B cell (primary cell): ENCODE measurements at regions of chr2 and their contacts with region 1.

Region 1: DNA sequence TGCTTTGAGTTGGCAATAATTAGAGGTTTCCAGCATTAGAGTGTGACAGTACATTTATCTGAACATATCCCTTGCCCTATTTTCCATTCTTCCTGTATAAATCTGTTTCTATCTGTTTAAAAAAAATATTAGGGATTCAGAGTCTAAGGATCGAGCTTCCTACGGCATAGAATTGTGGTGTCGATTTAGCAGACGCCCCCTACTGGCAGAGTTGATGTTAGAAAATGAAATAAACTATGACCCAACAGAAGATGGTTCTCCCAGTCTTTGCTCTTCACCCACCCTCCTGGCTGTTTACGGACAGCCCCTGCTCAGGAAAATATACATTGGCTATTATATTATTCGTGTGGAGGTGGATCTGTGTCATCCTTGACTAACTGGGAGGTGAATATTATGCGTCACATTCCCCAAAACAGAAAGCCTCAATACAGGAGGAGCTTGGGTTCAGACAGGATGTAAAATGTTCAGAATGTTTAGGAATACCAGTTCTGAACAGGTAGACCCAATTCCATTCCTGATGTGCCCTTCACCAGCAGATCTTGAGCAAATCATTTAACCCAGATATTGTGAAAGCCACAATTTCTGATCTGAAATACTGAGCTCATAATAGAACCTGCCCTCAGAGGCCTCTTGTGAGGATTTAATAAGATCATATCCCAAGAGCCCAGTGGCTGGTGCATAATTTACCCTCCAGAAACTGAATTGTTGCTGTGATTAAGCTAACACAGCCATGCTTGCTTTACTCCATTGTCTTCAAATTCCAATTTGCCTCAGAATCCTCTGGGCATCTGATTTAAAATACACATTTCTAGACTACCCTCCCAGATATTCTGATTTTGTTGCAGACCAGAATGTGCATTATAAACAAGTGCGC is 10.8 kb upstream of the ERMN start:
- DNase-seq: peak; percentile 68
- ATAC-seq: no peak
- H3K4me3 ChIP-seq: peak overlapping the region in 1 of 5 experiments; percentile 37
- H3K4me3 Mint-ChIP-seq: no peak overlapping the region
- H3K27ac ChIP-seq: no peak overlapping the region
- H3K27ac Mint-ChIP-seq: no peak overlapping the region
- H3K4me1 ChIP-seq: peaks cover 6% of the 10 kb centered on the region in 2 donors
- H3K4me1 Mint-ChIP-seq: peaks cover 7% of the 10 kb centered on the region
- H3K27me3 ChIP-seq: no peaks in the 10 kb centered on the region
- H3K27me3 Mint-ChIP-seq: no peaks in the 10 kb centered on the region
- CTCF ChIP-seq: peak; percentile 86

Region 2: DNA sequence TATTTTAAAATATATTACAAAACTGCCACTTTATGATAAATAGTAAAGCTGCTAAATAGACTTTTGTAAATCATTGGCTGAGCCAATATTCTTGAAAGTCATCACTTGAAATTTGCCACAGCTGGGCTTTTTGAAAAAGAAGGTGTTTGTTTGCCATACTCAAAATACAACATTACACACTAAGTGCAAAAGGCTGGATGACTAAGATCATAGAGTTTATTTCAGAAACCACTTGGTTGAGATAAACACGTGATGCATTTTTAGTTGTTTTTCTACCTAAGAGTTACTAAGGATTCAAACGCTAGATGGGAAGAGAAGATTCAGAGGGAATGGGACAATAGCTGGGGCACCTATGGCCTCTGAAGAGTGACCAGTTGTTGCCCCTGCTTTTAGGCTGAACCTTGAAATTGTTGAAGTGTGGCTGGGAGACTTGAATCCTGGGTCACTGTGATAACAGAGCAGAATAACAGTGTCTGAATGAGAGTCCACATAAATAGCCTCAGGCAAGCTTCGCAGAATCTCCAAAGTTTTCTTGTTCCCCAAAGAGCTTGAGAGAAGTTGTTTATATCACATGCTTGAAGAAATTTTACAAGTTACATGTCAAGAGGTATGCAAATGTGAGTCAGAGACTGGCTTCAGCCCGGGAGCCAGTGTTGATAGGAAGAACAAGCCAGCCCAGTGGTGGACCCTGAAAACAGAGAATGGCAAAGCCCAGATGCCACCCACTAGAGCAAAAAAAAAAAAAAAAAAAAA is 490.4 kb before region 1 on chr2:
- CTCF ChIA-PET with region 1: no interaction called
- POLR2A ChIA-PET with region 1: no interaction called
- intact Hi-C with region 1: no loop called
- DNase-seq: no peak
- ATAC-seq: no peak
- H3K4me3 ChIP-seq: no peak overlapping the region
- H3K4me3 Mint-ChIP-seq: no peak overlapping the region
- H3K27ac ChIP-seq: no peak overlapping the region
- H3K27ac Mint-ChIP-seq: no peak overlapping the region
- H3K4me1 ChIP-seq: no peaks in the 10 kb centered on the region
- H3K4me1 Mint-ChIP-seq: no peaks in the 10 kb centered on the region
- H3K27me3 ChIP-seq: no peaks in the 10 kb centered on the region
- H3K27me3 Mint-ChIP-seq: no peaks in the 10 kb centered on the region
- CTCF ChIP-seq: no peak

Region 3: GRCh38 chr2:157355618-157356017 is 19.2 kb after region 1 on chr2:
- CTCF ChIA-PET with region 1: interaction called, 28 read pairs
- POLR2A ChIA-PET with region 1: no interaction called
- intact Hi-C with region 1: no loop called
- DNase-seq: no peak
- ATAC-seq: no peak
- H3K4me3 ChIP-seq: no peak overlapping the region
- H3K4me3 Mint-ChIP-seq: no peak overlapping the region
- H3K27ac ChIP-seq: no peak overlapping the region
- H3K27ac Mint-ChIP-seq: no peak overlapping the region
- H3K4me1 ChIP-seq: no peaks in the 10 kb centered on the region
- H3K4me1 Mint-ChIP-seq: no peaks in the 10 kb centered on the region
- H3K27me3 ChIP-seq: no peaks in the 10 kb centered on the region
- H3K27me3 Mint-ChIP-seq: no peaks in the 10 kb centered on the region
- CTCF ChIP-seq: no peak

Region 4: GRCh38 chr2:157413326-157414035 is 77.1 kb after region 1 on chr2:
- CTCF ChIA-PET with region 1: interaction called, 20 read pairs
- POLR2A ChIA-PET with region 1: no interaction called
- intact Hi-C with region 1: no loop called
- DNase-seq: peak; percentile 73
- ATAC-seq: peak; percentile 58
- H3K4me3 ChIP-seq: peak overlapping the region in 1 of 5 experiments; percentile 31
- H3K4me3 Mint-ChIP-seq: peak overlapping the region; percentile 60
- H3K27ac ChIP-seq: peak overlapping the region; percentile 34 to 69
- H3K27ac Mint-ChIP-seq: peak overlapping the region; percentile 82
- H3K4me1 ChIP-seq: peaks cover 53 to 61% of the 10 kb centered on the region in 2 donors
- H3K4me1 Mint-ChIP-seq: peaks cover 77% of the 10 kb centered on the region
- H3K27me3 ChIP-seq: no peaks in the 10 kb centered on the region
- H3K27me3 Mint-ChIP-seq: no peaks in the 10 kb centered on the region
- CTCF ChIP-seq: no peak

Region 5: GRCh38 chr2:157433394-157433793 is 97.0 kb after region 1 on chr2:
- CTCF ChIA-PET with region 1: interaction called, 18 read pairs
- POLR2A ChIA-PET with region 1: interaction called, 3 read pairs
- intact Hi-C with region 1: no loop called
- DNase-seq: no peak
- ATAC-seq: no peak
- H3K4me3 ChIP-seq: no peak overlapping the region
- H3K4me3 Mint-ChIP-seq: peak overlapping the region; percentile 68
- H3K27ac ChIP-seq: peak overlapping the region in 1 of 2 donors; percentile 34
- H3K27ac Mint-ChIP-seq: peak overlapping the region; percentile 39
- H3K4me1 ChIP-seq: peaks cover 65 to 73% of the 10 kb centered on the region in 2 donors
- H3K4me1 Mint-ChIP-seq: peaks cover 82% of the 10 kb centered on the region
- H3K27me3 ChIP-seq: no peaks in the 10 kb centered on the region
- H3K27me3 Mint-ChIP-seq: no peaks in the 10 kb centered on the region
- CTCF ChIP-seq: no peak

Region 6: GRCh38 chr2:157492189-157492773 is 155.9 kb after region 1 on chr2:
- CTCF ChIA-PET with region 1: interaction called, 157 read pairs
- POLR2A ChIA-PET with region 1: no interaction called
- intact Hi-C with region 1: no loop called
- DNase-seq: peak; percentile 81
- ATAC-seq: peak; percentile 96
- H3K4me3 ChIP-seq: no peak overlapping the region
- H3K4me3 Mint-ChIP-seq: no peak overlapping the region
- H3K27ac ChIP-seq: no peak overlapping the region
- H3K27ac Mint-ChIP-seq: no peak overlapping the region
- H3K4me1 ChIP-seq: peaks cover 6 to 14% of the 10 kb centered on the region in 2 donors
- H3K4me1 Mint-ChIP-seq: peaks cover 20% of the 10 kb centered on the region
- H3K27me3 ChIP-seq: no peaks in the 10 kb centered on the region
- H3K27me3 Mint-ChIP-seq: no peaks in the 10 kb centered on the region
- CTCF ChIP-seq: peak; percentile 91